Right ventricle myocardium superior (tissue), 1 donor: ENCODE measurements at regions of chr14 and their contacts with region 1.

Region 1: DNA sequence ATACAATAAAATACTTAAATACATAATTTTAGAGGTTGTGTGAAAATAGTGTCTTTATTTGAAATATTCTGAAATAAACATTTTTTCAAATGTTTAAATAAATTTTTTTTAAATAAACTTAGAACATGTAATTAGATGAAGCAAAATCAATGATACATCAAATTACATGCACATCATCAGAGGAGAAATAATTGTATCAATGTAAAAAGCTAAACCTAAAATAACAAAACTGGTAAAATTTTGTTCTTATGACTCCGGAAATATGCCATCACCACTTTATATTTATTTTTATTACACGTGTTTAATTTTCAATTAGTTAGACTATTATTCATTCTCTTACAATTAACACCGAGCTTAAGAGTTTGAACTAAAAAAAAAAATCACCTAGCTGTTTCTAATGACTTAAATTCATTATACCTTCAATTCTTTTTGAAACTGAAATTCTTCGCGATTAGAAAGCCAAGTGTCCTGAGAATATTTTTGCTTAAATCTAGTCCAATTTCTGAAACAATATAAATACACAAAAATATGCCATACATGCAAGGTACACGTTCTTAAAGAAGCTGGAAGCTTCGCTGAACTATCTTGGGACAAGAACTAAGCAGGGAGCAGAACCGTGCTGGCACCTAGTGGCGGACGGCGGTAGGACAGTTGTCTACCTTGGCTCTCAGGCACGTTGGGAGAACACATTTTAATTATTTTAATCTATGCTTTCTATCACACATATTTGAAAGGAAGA is 230.5 kb downstream of the SLC25A21 start:
- DNase-seq: peak; percentile 78
- ATAC-seq: peak; percentile 91

Region 2: GRCh38 chr14:36553656-36554260 is 388.2 kb before region 1 on chr14:
- intact Hi-C with region 1: loop called (anchors 5 kb)
- DNase-seq: no peak
- ATAC-seq: peak; percentile 46

Region 3: GRCh38 chr14:36647824-36648753 is 293.9 kb before region 1 on chr14:
- intact Hi-C with region 1: loop called (anchors 5 kb)
- DNase-seq: no peak
- ATAC-seq: peak; percentile 90